SK-N-SH (cell line): ENCODE measurements at regions of chr20 and their contacts with region 1.

Region 1: GRCh38 chr20:47379433-47380150 is 23.1 kb upstream of the ZMYND8 start:
- DNase-seq: no peak
- H3K4me3 ChIP-seq: no peak overlapping the region
- H3K27ac ChIP-seq: peak overlapping the region in 1 of 2 experiments; percentile 69; a peak in 2 of 4 replicates
- H3K4me1 ChIP-seq: peaks cover 3 to 15% of the 10 kb centered on the region in 2 experiments; a peak in 3 of 4 replicates
- H3K27me3 ChIP-seq: no peaks in the 10 kb centered on the region
- CTCF ChIP-seq: no peak
- EP300 ChIP-seq: peak in 1 of 2 experiments; percentile 88; a peak in 2 of 4 replicates
- RAD21 ChIP-seq: no peak

Region 2: DNA sequence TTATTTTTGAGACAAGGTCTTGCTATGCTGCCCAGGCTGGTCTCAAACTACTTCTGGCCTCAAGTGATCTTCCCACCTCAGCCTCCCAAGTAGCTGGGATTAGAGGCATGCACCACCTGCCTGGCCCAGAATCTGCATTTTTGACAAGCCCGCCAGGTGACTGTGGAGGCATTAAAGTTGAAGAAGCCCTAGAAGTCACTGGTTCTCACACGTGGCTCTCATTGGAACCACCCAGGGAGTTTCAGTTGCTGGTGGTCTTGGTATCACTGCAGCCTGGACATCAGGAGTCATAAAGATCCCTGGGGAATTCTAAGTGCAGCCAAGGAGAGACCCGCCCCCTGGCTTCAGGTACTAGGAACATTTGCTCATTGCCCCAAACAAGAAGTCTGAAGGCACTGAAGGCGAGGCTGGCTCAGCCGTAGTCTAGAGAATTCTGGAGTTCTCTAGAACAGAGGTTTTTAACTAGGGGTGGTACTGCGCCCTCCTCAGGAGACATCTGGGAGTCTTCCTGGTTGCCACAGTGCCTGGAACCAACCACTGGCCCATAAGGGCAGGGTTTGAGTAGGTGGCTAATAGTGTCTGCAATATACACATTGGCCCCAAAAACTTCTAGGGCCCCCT is 205.9 kb before region 1 on chr20:
- CTCF ChIA-PET with region 1: interaction called, 11 read pairs
- POLR2A ChIA-PET with region 1: no interaction called
- DNase-seq: no peak
- H3K4me3 ChIP-seq: no peak overlapping the region
- H3K27ac ChIP-seq: no peak overlapping the region
- H3K4me1 ChIP-seq: no peaks in the 10 kb centered on the region
- H3K27me3 ChIP-seq: no peaks in the 10 kb centered on the region
- CTCF ChIP-seq: no peak; the same call in 1 of the 2 replicates
- EP300 ChIP-seq: no peak
- RAD21 ChIP-seq: no peak

Region 3: GRCh38 chr20:47228654-47229053 is 150.9 kb before region 1 on chr20:
- CTCF ChIA-PET with region 1: interaction called, 17 read pairs
- POLR2A ChIA-PET with region 1: no interaction called
- DNase-seq: no peak
- H3K4me3 ChIP-seq: no peak overlapping the region
- H3K27ac ChIP-seq: no peak overlapping the region
- H3K4me1 ChIP-seq: peaks cover 8 to 16% of the 10 kb centered on the region in 2 experiments; a peak in 3 of 4 replicates
- H3K27me3 ChIP-seq: no peaks in the 10 kb centered on the region
- CTCF ChIP-seq: no peak
- EP300 ChIP-seq: no peak
- RAD21 ChIP-seq: no peak

Region 4: GRCh38 chr20:47296950-47297349 is 82.6 kb before region 1 on chr20:
- CTCF ChIA-PET with region 1: interaction called, 62 read pairs
- POLR2A ChIA-PET with region 1: no interaction called
- DNase-seq: no peak
- H3K4me3 ChIP-seq: no peak overlapping the region
- H3K27ac ChIP-seq: no peak overlapping the region
- H3K4me1 ChIP-seq: no peaks in the 10 kb centered on the region
- H3K27me3 ChIP-seq: no peaks in the 10 kb centered on the region
- CTCF ChIP-seq: peak; percentile 38
- EP300 ChIP-seq: no peak
- RAD21 ChIP-seq: peak; percentile 56

Region 5: DNA sequence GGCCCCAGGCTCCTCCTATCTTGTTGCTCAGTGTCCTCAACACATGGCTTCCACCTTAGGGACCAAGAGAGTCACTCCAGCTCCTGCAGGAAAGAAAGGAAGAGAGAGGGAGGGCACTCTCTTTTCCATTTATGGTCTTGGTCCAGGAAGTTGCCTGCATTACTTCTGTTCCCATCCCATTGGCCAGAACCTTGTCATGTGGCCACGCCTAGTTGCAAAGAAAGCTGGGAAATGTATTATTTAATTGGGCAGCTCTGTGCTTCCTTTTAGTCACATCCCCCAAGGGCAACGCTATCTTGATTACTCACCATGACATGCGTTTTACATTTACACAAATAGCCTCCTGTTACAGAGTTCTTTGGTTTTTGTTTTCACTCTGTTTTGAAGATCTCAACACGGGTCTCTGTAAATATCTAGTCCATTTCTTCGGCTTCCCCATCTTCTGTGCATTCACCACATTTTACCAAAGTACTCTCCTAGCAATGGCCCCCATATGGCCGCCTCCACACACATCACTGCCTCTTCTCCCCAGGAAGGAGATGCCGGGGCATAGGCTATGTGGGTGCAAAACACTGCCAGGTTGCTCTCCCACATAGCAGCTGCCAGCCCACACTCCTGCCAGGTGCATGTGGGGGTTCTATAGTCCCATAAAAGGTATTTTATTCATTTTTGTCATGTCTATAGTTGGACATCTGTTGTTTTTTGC is 12.6 kb after region 1 on chr20:
- CTCF ChIA-PET with region 1: interaction called, 31 read pairs
- POLR2A ChIA-PET with region 1: no interaction called
- DNase-seq: peak; percentile 23
- H3K4me3 ChIP-seq: no peak overlapping the region
- H3K27ac ChIP-seq: peak overlapping the region in 1 of 2 experiments; percentile 70; a peak in 2 of 4 replicates
- H3K4me1 ChIP-seq: no peaks in the 10 kb centered on the region
- H3K27me3 ChIP-seq: no peaks in the 10 kb centered on the region
- CTCF ChIP-seq: no peak
- EP300 ChIP-seq: no peak
- RAD21 ChIP-seq: no peak

Region 6: GRCh38 chr20:47501483-47502270 is 122.1 kb after region 1 on chr20 and contains the start of gene NCOA3:
- CTCF ChIA-PET with region 1: interaction called, 23 read pairs
- POLR2A ChIA-PET with region 1: interaction called, 4 read pairs
- DNase-seq: peak; percentile 98
- H3K4me3 ChIP-seq: peak within 1 kb of the TSS; percentile 73 to 87
- H3K27ac ChIP-seq: peak within 1 kb of the TSS; percentile 83 to 90
- H3K4me1 ChIP-seq: peaks cover 0 to 9% of the 10 kb centered on the region in 2 experiments; a peak in 3 of 4 replicates
- H3K27me3 ChIP-seq: no peaks in the 10 kb centered on the region
- CTCF ChIP-seq: peak; percentile 37
- EP300 ChIP-seq: peak; percentile 17 to 44; a peak in 2 of 4 replicates
- RAD21 ChIP-seq: no peak; the same call in 1 of the 2 replicates
- polyA plus RNA-seq, gene NCOA3: 5.8 and 8.3 TPM in 2 replicates

Region 7: DNA sequence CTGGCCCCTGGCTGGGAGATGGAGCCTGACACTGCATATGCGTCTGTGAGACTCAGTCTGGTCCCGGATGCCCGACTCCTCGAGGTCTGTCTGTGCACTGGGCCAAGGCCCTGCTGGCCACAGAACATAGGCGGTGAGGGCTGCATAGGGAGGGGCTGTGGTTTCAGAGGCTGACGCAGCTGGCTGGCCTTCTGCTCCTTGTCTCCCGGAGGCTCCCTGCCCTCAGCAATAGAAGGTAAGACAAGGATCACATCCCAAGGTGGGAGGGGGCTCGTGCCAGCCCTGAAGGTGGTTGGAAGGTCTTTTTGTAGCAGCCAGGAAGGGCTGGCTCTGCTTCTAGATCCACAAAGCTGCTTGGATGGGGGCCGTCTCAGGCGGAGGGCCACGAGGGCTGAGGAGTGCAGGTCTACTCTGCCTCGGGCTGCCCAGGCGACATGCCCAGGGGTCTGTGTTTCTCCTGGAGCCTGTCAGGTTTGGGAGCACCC is 645.5 kb after region 1 on chr20:
- CTCF ChIA-PET with region 1: no interaction called
- POLR2A ChIA-PET with region 1: no interaction called
- DNase-seq: peak; percentile 76
- H3K4me3 ChIP-seq: no peak overlapping the region
- H3K27ac ChIP-seq: peak overlapping the region; percentile 47 to 69
- H3K4me1 ChIP-seq: peaks cover 0 to 16% of the 10 kb centered on the region in 2 experiments; a peak in 2 of 4 replicates
- H3K27me3 ChIP-seq: no peaks in the 10 kb centered on the region
- CTCF ChIP-seq: no peak
- EP300 ChIP-seq: no peak
- RAD21 ChIP-seq: no peak